ENCODE measurements at regions of chr11 and their contacts with region 1.

Region 1: DNA sequence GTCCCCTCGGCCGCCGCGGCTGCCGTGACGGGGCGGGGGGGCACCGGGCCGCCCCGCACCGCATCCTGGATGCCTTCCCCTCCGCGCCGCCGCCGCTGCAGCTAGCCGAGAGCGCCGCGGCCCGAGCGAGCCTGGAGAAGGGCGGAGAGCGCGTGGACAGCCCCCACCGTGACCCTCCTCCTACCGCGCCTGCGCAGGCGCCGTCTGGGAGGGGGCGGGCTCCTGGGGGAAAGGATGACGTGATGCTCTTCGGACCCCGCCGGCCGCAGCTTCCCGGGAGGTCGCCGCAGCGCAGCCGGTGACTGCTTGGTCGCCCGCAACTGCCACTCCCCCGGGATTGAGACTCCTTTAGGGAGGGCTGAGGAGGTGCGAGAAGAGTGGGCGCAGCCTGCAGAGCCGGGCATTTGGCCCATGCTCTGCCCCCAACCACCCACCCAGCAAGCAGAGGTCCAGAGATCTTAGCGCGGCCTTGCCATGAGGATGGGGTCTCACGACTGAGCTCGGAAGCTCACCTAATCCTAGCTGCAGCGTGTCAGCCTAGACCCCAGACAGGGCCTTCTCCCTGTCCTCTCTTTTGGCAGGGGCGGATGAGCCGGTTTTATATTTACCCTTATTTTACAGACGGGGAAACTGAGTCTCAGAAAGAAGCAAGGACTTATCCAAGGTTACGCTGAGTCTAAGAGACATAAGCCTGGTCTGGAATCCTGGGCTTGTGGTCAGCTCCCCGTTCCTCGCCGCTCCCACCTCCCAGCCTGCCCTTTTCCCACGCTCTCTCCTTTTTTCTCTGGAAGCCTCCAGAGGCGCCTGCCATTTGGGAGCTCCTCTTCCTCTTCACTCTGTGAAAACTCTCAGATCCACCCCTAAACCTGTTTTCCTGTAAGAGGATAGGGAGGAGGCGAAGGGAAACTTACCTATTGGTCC is at the start of gene DENND5A:
- DNase-seq: peak; percentile 17 to 76 (median 42)
- ATAC-seq: peak; percentile 58 to 63
- H3K4me3 Mint-ChIP-seq: peak within 1 kb of the TSS; percentile 87 to 100 (median 97)
- H3K27ac Mint-ChIP-seq: peak within 1 kb of the TSS; percentile 51 to 98 (median 94)
- H3K4me1 Mint-ChIP-seq: peaks cover 25 to 43% (median 37%) of the 10 kb centered on the region in 4 donors
- H3K27me3 Mint-ChIP-seq: peaks cover 0 to 1% (median 0%) of the 10 kb centered on the region in 5 donors
- polyA plus RNA-seq, gene DENND5A: 26.4 to 65.3 (median 33.5) TPM

Region 2: DNA sequence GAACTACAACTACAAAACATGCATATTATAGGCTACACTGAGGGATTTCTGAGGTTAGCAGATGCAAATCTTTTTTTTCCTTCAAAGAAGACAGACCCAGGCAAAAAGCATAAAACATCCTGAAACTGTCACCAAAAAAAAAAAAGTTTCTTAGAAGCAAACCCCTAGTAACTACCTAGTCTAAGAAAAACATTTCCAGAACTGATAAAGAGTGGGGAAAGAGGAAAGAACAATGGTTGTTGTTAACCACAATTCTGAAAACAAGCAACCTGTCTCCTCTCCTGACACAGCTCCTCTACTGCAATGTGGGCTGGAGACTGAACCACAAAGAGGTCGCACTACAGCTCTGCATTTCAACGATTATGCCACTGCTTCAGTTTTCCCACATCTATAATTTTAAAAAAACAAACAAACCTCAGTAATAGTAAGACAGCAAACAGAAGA is 15.3 kb before region 1 on chr11:
- POLR2A ChIA-PET with region 1: interaction called, 42 read pairs
- DNase-seq: peak in 9 of 10 donors; percentile 13 to 84 (median 59)
- ATAC-seq: peak; percentile 90 to 91
- H3K4me3 Mint-ChIP-seq: peak overlapping the region; percentile 44 to 79 (median 62)
- H3K27ac Mint-ChIP-seq: peak overlapping the region; percentile 60 to 93 (median 87)
- H3K4me1 Mint-ChIP-seq: peaks cover 28 to 81% (median 68%) of the 10 kb centered on the region in 4 donors
- H3K27me3 Mint-ChIP-seq: no peaks in the 10 kb centered on the region

Measured in naive thymus-derived CD8-positive, alpha-beta T cell (primary cell).